Gastrocnemius medialis (tissue), 4 donors: ENCODE measurements at regions of chr14 and their contacts with region 1.

Region 1: GRCh38 chr14:100108042-100108825 is 43.0 kb downstream of the EVL start:
- DNase-seq: peak; percentile 44 to 70
- ATAC-seq: peak; percentile 72 to 93
- H3K4me3 ChIP-seq: no peak overlapping the region
- H3K27ac ChIP-seq: peak overlapping the region in 1 of 4 donors; percentile 28
- H3K4me1 ChIP-seq: peaks cover 9 to 39% of the 10 kb centered on the region in 2 donors
- H3K27me3 ChIP-seq: no peaks in the 10 kb centered on the region
- CTCF ChIP-seq: peak; percentile 65 to 87 (median 84)
- POLR2A ChIP-seq: no peak

Region 2: GRCh38 chr14:100067971-100068959 is 40.0 kb before region 1 on chr14:
- in situ Hi-C with region 1: no loop called
- intact Hi-C with region 1: loop called (anchors 5 kb)
- DNase-seq: no peak
- ATAC-seq: no peak
- H3K4me3 ChIP-seq: no peak overlapping the region
- H3K27ac ChIP-seq: no peak overlapping the region
- H3K4me1 ChIP-seq: peaks cover 0 to 5% of the 10 kb centered on the region in 2 donors
- H3K27me3 ChIP-seq: no peaks in the 10 kb centered on the region
- CTCF ChIP-seq: no peak
- POLR2A ChIP-seq: no peak